Right ventricle myocardium inferior (tissue), 1 donor: ENCODE measurements at regions of chr17 and their contacts with region 1.

Region 1: DNA sequence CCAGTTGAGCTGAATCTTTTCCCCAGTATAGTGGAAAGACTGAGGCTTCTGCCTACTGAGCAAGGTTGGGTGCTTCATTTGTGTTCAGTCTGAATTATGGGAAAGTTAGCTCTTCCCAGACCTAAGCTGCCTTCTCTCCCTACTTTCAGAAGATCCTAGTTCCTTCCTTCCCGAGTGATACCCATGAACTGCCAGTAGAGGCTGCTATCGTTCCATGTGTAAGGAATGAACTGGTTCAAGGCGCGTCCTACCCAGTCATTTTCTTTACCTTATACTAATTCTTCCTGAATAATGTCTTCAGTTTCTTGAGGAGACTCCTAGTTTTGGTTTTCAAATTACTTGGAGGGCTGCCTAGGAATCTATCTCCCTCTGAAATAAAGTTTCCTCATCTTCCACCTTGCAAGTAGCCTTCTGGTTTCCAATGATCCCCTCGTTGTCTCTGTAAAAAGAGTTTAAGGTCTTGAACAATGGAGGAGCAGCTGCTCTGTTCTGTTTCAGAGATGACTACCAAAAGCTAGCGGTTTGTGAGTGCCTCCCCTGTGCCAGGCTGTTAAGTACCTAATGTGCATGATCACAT is 934 bp upstream of the AOC2 start:
- DNase-seq: no peak
- ATAC-seq: peak; percentile 65

Region 2: DNA sequence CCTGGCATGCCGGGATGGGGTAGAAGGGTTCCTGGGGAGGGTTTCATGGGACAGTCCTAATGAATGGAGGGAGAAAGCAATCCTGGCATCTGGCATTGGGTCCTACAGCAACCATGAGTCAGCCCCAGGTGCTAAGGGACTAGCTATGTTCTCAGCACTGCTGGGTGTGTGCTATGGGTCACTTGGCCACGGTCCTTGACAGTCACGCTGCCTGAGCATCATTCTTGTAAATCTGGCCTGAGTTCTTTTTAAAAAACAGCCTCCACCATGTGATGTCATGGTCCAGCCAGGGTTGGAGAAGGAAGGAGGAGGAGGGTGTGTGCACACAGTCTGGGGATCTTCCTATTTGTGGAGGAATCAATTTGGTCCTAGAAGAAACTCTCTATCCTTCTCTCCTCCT is 88.7 kb before region 1 on chr17:
- intact Hi-C with region 1: no loop called
- DNase-seq: no peak
- ATAC-seq: peak; percentile 91

Region 3: GRCh38 chr17:42928714-42929496 is 85.5 kb after region 1 on chr17:
- intact Hi-C with region 1: loop called (anchors 2 kb)
- DNase-seq: no peak
- ATAC-seq: peak; percentile 90

Region 4: DNA sequence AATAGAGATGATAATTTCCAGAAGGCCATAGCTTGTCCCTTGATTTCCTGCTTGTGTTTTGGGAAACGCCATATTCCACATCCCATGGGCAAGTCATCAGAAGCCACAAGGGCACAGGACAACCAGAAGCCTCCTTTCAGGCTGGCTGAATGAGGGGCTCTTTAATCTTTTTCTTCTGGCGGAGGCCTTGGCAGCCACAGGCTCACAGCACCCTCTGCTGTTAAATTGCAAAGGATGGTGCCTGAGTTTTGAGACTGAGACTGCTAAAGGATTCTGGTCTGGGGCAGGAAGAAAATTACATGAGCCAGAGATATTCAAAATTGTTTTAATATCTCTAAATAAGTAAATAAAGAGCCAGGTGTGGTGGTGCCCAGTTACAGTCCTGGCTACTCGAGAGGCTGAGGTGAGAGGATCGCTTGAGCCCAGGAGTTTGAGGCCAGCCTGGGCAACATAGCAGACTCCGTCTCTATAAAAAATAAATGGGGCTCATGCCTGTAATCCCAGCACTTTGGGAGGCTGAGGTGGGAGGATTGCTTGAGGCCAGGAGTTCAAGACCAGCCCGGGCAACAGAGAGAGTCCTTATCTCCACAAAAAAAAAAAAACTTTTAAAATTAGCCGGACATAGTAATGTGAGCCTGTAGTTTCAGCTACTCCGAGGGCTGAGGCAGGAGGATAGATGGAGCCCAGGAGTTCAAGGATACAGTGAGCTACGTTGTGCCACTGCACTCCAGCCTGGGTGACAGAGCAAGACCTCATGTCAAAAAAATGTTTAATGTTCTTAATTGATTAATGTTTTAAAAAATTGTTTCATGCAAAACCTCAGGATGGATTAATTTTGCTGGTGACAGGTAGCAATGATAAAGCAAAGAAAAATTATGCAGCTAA is 94.5 kb after region 1 on chr17:
- intact Hi-C with region 1: loop called (anchors 1 kb)
- DNase-seq: no peak
- ATAC-seq: peak; percentile 65

Region 5: DNA sequence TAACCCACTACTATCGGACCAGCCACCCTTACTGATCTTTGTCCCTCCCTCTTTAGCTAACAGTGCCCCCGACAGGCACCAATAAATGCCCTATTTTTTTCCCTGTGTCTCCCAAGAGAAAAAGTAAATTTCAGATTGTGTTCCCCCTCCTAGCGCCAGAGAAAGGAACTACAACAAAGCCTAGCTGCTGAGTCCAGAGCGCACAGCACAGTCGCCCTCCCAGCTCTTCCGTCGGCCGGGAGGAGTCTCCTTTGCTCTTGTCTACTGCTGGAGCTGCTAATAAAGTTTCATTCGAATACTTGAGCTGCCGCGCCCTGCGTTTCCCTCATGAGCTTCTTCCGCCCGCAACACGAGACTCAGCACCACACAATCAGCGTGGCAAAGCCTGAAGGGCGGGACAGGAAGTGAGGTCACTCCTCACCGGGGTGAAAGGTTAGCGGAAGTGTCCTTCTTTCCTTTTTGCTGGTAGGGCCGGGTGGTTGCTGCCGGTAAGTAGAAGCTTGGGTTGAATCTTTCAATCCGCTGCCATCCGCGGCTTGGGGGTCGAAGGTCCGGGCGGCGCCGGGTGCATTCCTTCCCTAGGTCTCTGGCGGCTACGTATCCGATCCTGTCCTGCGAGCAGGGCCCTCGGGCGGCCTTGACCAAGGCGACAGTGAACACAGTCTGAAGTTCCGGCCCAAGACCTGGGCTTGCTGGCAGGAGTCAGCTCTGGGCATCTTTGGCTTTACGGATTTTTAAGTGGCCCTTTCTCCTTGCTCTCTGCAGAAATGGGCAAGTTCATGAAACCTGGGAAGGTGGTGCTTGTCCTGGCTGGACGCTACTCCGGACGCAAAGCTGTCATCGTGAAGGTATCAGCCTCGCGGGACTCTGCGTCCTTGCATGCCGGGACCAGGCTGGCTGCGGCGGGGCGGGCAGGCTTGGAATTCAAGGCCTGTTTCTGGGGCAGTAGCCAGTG is 154.8 kb after region 1 on chr17 and contains the start of gene RPL27:
- intact Hi-C with region 1: loop called (anchors 5 kb)
- DNase-seq: peak; percentile 99
- ATAC-seq: peak; percentile 98
- total RNA-seq, gene RPL27: 791 TPM